ENCODE measurements at regions of chr11 and their contacts with region 1.

Region 1: DNA sequence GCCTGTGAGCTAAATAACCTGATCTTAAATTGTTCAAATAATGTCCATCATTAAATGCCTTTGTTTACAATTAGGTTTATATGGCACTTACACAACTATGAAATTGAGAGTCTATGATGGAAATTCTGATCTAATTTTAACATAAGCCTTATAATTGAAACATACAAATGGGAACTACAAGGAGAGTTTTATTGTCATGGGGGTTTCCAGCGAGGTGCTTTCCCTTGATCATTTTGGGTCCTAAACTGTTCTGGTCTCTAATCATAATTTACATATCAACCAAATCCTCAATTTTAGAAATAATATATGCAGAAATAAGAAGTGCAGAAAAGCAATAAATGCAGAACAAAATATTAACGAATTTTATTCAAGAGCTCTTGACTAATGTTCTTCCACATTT is 44.9 kb downstream of the RRAS2 start:
- DNase-seq: no peak
- CTCF ChIP-seq: no peak

Region 2: DNA sequence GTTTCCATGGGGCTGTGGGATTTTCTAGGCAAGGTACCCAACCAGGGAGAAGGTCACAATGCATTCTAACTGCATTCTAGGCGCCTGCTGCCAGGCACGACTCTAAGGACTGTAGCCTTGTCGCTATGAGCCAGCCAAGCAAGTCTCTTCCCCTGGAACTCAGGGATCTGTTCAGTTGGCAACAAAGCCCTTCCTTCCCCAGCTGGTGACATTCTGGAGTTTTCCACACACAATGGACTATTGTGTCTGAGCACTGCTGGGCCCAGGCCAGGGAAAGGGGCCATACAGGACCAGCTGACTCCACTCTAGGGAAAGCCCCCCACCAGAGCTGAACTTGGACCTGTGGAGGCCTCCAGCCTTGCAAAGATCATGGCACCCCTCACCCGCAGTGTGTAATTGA is 71.9 kb before region 1 on chr11:
- CTCF ChIA-PET with region 1: no interaction called
- POLR2A ChIA-PET with region 1: no interaction called
- DNase-seq: no peak
- CTCF ChIP-seq: no peak

Region 3: DNA sequence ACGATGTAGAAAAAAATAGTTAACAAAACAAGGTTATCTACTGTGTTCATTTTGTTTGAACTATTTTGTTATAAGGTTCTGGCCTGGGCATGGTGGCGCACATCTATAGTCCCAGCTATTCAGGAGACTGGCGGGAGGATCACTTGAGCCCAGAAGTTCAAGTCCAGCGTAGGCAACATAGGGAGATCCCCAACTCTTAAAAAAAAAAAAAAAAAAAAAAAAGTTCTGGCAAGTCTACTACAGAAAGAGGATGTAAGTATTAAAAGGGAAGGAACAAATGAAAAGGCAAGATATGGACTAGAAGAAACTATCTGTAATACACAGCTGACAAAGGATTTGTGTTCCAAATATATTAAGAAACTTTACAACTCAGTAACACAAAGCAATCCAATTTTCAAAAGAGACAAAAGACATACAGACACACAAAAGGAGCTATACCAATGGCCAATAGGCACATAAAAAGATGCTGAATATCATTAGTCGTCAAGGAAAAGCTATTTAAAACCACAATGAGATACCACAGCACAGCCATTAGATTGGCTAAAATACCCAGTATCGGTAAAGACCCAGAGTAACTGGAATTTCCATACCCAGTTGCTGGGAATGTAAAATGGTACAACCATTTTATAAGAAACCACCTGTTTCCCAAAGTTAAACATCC is 17.5 kb after region 1 on chr11:
- CTCF ChIA-PET with region 1: interaction called, 3 read pairs
- POLR2A ChIA-PET with region 1: interaction called, 10 read pairs
- DNase-seq: peak; percentile 24
- CTCF ChIP-seq: no peak